ENCODE measurements at regions of chr17 and their contacts with region 1.

Region 1: GRCh38 chr17:18033442-18034099 is 5.4 kb downstream of the ATPAF2 start:
- DNase-seq: no peak
- ATAC-seq: peak; percentile 79
- H3K4me3 Mint-ChIP-seq: no peak overlapping the region
- H3K27ac Mint-ChIP-seq: peak overlapping the region; percentile 61
- H3K4me1 Mint-ChIP-seq: peaks cover 50% of the 10 kb centered on the region
- H3K27me3 Mint-ChIP-seq: no peaks in the 10 kb centered on the region
- CTCF ChIP-seq: peak; percentile 54

Region 2: DNA sequence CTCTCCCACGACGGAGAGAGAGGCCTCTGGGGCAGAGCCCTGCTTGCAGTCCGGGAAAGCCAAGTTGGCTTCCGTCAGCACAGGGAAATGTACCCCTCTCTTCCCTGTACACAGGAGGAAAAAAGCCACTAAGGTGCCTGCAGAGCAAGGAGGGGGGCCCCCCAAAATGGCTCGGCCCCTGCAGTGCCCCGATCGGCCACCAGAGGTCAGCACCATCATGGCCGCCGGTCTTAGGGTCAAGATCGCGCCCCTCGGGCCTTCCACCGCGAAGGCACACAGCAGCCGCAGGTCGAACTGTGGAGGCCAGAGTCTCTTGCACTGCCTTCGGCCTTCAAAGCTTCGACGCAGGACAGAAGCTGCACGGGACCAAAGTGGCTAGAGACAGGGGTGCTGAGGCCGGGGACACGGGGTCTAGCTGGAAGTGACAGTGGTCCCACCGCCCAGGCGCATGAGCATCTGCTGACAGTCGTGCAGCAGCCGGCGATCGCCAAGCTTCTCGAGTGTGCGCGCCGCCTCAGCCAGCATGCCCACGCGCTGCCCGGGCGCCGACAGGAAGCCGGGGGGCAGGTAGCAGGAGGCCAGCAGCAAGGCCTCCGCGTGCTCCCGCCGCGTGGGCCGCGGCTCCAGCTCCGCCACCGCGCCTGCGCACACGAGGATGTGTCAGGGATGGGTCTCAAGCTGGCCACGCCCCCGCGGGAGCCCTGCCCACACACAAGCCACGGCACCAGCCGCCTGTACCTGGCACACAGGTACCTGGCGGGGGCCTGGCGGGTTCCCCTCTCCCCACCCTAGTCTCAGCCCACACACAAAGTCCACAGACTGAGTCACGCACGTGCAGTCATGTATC is 221.1 kb before region 1 on chr17:
- CTCF ChIA-PET with region 1: interaction called, 10 read pairs
- POLR2A ChIA-PET with region 1: interaction called, 5 read pairs
- intact Hi-C with region 1: loop called (anchors 1 kb)
- DNase-seq: peak; percentile 81
- ATAC-seq: peak; percentile 82
- H3K4me3 Mint-ChIP-seq: no peak overlapping the region
- H3K27ac Mint-ChIP-seq: no peak overlapping the region
- H3K4me1 Mint-ChIP-seq: peaks cover 11% of the 10 kb centered on the region
- H3K27me3 Mint-ChIP-seq: no peaks in the 10 kb centered on the region
- CTCF ChIP-seq: peak; percentile 70

Region 3: GRCh38 chr17:17859909-17860765 is 173.4 kb before region 1 on chr17:
- CTCF ChIA-PET with region 1: interaction called, 6 read pairs
- POLR2A ChIA-PET with region 1: no interaction called
- intact Hi-C with region 1: loop called (anchors 1 kb)
- DNase-seq: peak; percentile 65
- ATAC-seq: peak; percentile 99
- H3K4me3 Mint-ChIP-seq: no peak overlapping the region
- H3K27ac Mint-ChIP-seq: no peak overlapping the region
- H3K4me1 Mint-ChIP-seq: no peaks in the 10 kb centered on the region
- H3K27me3 Mint-ChIP-seq: no peaks in the 10 kb centered on the region
- CTCF ChIP-seq: peak; percentile 84

Region 4: GRCh38 chr17:17994271-17995069 is 39.1 kb before region 1 on chr17:
- CTCF ChIA-PET with region 1: no interaction called
- POLR2A ChIA-PET with region 1: no interaction called
- intact Hi-C with region 1: loop called (anchors 5 kb)
- DNase-seq: no peak
- ATAC-seq: peak; percentile 18
- H3K4me3 Mint-ChIP-seq: no peak overlapping the region
- H3K27ac Mint-ChIP-seq: no peak overlapping the region
- H3K4me1 Mint-ChIP-seq: no peaks in the 10 kb centered on the region
- H3K27me3 Mint-ChIP-seq: no peaks in the 10 kb centered on the region
- CTCF ChIP-seq: no peak

Region 5: DNA sequence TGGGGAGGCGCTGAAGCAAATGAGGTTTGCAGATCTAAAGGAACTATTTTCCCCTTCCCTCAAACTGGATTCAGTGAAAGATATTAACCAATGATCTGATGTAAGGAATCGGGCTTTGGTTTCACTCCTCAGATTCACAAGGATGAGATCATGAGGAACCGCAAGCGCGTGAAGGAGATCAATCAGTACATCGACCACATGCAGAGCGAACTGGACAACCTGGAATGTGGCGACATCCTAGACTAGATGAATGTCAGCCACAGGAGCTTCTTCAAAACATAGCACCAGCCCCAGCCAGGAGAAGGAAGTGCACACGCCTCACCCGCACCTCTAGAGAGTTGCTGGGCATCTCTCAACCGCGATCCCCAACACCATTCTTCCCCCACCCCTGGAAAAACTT is 17.1 kb before region 1 on chr17:
- CTCF ChIA-PET with region 1: interaction called, 7 read pairs
- POLR2A ChIA-PET with region 1: interaction called, 15 read pairs
- intact Hi-C with region 1: no loop called
- DNase-seq: no peak
- ATAC-seq: no peak
- H3K4me3 Mint-ChIP-seq: no peak overlapping the region
- H3K27ac Mint-ChIP-seq: no peak overlapping the region
- H3K4me1 Mint-ChIP-seq: no peaks in the 10 kb centered on the region
- H3K27me3 Mint-ChIP-seq: no peaks in the 10 kb centered on the region
- CTCF ChIP-seq: no peak

Region 6: GRCh38 chr17:18087610-18088491 is 54.3 kb after region 1 on chr17 and contains the start of gene DRG2:
- CTCF ChIA-PET with region 1: no interaction called
- POLR2A ChIA-PET with region 1: interaction called, 3 read pairs
- intact Hi-C with region 1: loop called (anchors 1 kb)
- DNase-seq: peak; percentile 93
- ATAC-seq: peak; percentile 95
- H3K4me3 Mint-ChIP-seq: peak within 1 kb of the TSS; percentile 99
- H3K27ac Mint-ChIP-seq: peak within 1 kb of the TSS; percentile 95
- H3K4me1 Mint-ChIP-seq: peaks cover 26% of the 10 kb centered on the region
- H3K27me3 Mint-ChIP-seq: no peaks in the 10 kb centered on the region
- CTCF ChIP-seq: no peak
- total RNA-seq, gene DRG2: 55.7 and 67.1 TPM in 2 replicates